A549 (cell line): ENCODE measurements at regions of chr16 and their contacts with region 1.

Region 1: DNA sequence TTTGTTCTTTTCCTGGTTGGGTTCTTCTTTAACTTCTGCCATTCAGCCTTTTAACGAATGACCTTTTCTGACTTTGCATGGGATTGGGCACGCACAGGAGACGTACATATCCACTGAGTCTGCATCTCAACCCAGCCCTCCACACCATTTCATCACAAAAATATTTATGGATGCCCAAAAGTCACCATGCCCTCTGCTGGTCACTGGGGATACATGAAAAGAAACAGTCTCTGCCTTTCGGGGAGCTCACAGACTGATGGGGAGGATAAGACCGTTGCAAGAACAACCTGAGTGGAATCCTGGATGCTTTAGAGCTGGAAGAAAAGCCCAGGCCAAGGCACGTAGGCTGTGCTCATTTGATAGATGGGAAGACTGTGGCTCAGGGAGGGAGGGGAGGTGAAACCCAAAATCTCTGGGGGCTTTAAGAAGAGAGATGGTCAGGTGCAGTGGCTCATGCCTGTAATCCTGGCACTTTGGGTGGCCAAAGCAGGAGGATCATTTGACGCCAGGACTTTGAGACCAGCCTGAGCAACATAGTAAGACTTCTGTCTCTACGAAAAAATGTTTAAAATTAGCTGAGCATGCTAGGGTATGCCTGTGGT is 7.9 kb upstream of the MT2A start:
- DNase-seq: peak; percentile 69 to 87
- ATAC-seq: peak; percentile 84 to 87
- H3K4me3 ChIP-seq: no peak overlapping the region
- H3K27ac ChIP-seq: peak overlapping the region; percentile 34 to 61; a peak in 4 of 6 replicates
- H3K4me1 ChIP-seq: peaks cover 12% of the 10 kb centered on the region
- CTCF ChIP-seq: peak; percentile 74
- EP300 ChIP-seq: no peak
- POLR2A ChIP-seq: no peak
- RAD21 ChIP-seq: peak; percentile 68 to 69

Region 2: DNA sequence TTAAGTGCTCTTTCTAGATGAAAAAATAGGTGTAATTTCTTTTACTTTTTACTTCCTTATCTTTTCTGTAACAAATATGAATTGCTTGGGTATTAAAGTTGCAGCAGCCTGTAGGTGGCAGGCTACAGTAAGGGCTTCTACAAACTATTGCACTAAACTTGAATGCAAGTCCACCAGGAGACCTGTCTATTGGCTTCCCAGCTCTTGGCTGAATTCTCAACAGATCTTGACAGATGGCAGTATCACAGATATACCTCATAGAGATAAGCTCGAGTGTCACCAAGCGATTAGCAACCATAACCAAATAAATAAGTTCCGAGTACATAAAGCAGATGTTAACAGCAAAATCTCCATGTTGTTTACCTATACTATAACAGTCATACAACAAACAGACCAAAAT is 86.5 kb before region 1 on chr16:
- CTCF ChIA-PET with region 1: interaction called, 43 read pairs
- POLR2A ChIA-PET with region 1: no interaction called
- DNase-seq: peak; percentile 51 to 81
- ATAC-seq: peak; percentile 89 to 95
- H3K4me3 ChIP-seq: no peak overlapping the region
- H3K27ac ChIP-seq: no peak overlapping the region
- H3K4me1 ChIP-seq: peaks cover 7% of the 10 kb centered on the region; the same call in 2 of the 3 replicates
- CTCF ChIP-seq: peak; percentile 85
- EP300 ChIP-seq: no peak
- POLR2A ChIP-seq: no peak
- RAD21 ChIP-seq: peak; percentile 74 to 75

Region 3: GRCh38 chr16:56519459-56520250 is 80.8 kb before region 1 on chr16 and contains the start of gene BBS2:
- CTCF ChIA-PET with region 1: interaction called, 43 read pairs
- POLR2A ChIA-PET with region 1: no interaction called
- DNase-seq: peak; percentile 84 to 86
- ATAC-seq: peak; percentile 94 to 98
- H3K4me3 ChIP-seq: peak within 1 kb of the TSS; percentile 79
- H3K27ac ChIP-seq: peak within 1 kb of the TSS; percentile 91 to 95
- H3K4me1 ChIP-seq: peaks cover 14% of the 10 kb centered on the region; the same call in 2 of the 3 replicates
- CTCF ChIP-seq: no peak
- EP300 ChIP-seq: no peak
- POLR2A ChIP-seq: peak; percentile 92
- RAD21 ChIP-seq: no peak
- polyA plus RNA-seq, gene BBS2: 61.4 and 62.3 TPM in 2 replicates

Region 4: GRCh38 chr16:56564773-56565477 is 35.6 kb before region 1 on chr16 and contains the start of gene MT4:
- CTCF ChIA-PET with region 1: interaction called, 11 read pairs
- POLR2A ChIA-PET with region 1: no interaction called
- DNase-seq: no peak
- ATAC-seq: no peak
- H3K4me3 ChIP-seq: no peak within 1 kb of the TSS
- H3K27ac ChIP-seq: no peak within 1 kb of the TSS
- H3K4me1 ChIP-seq: no peaks in the 10 kb centered on the region
- CTCF ChIP-seq: no peak
- EP300 ChIP-seq: no peak
- POLR2A ChIP-seq: no peak
- RAD21 ChIP-seq: no peak
- polyA plus RNA-seq, gene MT4: not detected in 2 replicates

Region 5: GRCh38 chr16:56576585-56577293 is 23.8 kb before region 1 on chr16:
- CTCF ChIA-PET with region 1: interaction called, 21 read pairs
- POLR2A ChIA-PET with region 1: no interaction called
- DNase-seq: peak; percentile 41 to 72
- ATAC-seq: peak; percentile 85 to 98
- H3K4me3 ChIP-seq: no peak overlapping the region
- H3K27ac ChIP-seq: no peak overlapping the region
- H3K4me1 ChIP-seq: peaks cover 2% of the 10 kb centered on the region; the same call in 2 of the 3 replicates
- CTCF ChIP-seq: peak; percentile 56
- EP300 ChIP-seq: no peak
- POLR2A ChIP-seq: no peak
- RAD21 ChIP-seq: peak; percentile 77 to 92